Calu3 (cell line): ENCODE measurements at regions of chr18 and their contacts with region 1.

Region 1: DNA sequence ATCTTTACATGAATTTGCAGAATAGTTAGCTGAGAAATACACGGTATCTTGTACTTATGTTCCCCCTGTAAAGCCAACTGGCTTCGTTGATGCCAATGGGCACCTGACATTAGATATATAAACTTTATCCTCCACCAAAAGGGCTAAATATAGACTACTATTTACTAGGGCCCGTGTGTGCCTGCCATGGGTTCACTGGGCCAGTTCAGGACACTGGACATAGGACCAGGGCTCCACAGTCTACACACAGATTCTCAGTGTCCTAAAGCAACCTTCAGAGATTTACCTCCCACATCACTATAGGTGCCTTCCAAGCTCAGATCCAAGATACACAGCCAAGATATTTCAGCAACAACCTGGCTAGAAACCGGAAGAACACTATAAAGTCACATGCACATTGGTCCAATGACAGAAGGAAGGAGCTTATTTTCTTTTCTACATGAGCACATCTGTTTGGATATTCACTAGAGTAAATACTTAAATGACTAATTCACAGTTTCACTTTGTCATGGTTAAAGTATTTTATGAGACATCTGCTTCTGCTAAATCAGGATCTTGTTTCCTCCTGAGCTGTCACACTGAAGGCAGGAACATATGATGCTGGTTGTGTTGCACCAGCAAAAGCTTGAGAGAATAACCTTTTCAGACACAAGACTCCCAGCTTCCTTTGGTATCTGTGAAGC is 95.1 kb downstream of the MYO5B start:
- DNase-seq: no peak
- H3K4me3 Mint-ChIP-seq: no peak overlapping the region
- H3K27ac Mint-ChIP-seq: peak overlapping the region; percentile 65
- H3K4me1 Mint-ChIP-seq: peaks cover 68% of the 10 kb centered on the region
- H3K27me3 Mint-ChIP-seq: no peaks in the 10 kb centered on the region
- CTCF ChIP-seq: no peak

Region 2: DNA sequence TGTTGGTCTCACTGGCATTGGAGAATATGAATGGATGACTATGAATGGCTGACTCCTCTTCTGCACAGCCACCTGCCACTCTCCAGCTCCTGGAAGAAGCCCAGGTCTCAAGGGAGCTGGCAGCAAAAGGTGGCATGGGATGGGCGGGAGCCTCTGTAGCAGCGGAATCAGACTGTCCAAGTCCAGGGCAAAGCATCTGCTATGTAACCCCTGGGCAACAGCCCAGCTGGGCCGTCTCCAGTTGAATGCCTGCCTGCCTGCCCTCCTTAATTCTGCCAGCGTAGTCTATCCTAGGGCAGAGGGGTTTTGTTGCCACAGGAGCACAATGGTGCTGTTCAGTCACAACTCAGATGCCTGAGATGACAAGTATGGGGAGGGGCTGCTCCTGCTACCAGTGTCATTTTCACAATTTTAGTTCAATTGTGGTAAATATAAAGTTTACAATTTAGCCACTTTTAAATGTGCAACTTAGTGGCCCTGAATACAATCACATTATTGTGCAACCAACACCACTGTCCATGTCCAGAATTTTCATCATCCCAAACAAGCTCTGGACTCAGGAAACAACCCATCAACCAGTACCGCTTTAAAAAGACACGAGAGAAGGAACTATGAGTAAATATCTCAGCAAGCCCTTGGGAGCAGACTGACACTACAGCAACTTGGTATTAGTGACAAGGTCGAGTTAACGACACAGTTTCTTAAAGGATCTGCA is 20.1 kb before region 1 on chr18:
- CTCF ChIA-PET with region 1: interaction called, 8 read pairs
- intact Hi-C with region 1: loop called (anchors 2 kb)
- DNase-seq: no peak
- H3K4me3 Mint-ChIP-seq: no peak overlapping the region
- H3K27ac Mint-ChIP-seq: peak overlapping the region; percentile 94
- H3K4me1 Mint-ChIP-seq: peaks cover 80% of the 10 kb centered on the region
- H3K27me3 Mint-ChIP-seq: no peaks in the 10 kb centered on the region
- CTCF ChIP-seq: no peak